A673 (cell line): ENCODE measurements at regions of chr2 and their contacts with region 1.

Region 1: GRCh38 chr2:234203135-234203984 is 152.9 kb downstream of the SPP2 start:
- DNase-seq: peak; percentile 82
- H3K4me3 ChIP-seq: no peak overlapping the region
- H3K27ac ChIP-seq: no peak overlapping the region
- H3K4me1 ChIP-seq: peaks cover 3% of the 10 kb centered on the region
- H3K27me3 ChIP-seq: no peaks in the 10 kb centered on the region
- CTCF ChIP-seq: no peak

Region 2: GRCh38 chr2:234218266-234219180 is 15.2 kb after region 1 on chr2:
- CTCF ChIA-PET with region 1: no interaction called
- POLR2A ChIA-PET with region 1: interaction called, 13 read pairs
- intact Hi-C with region 1: no loop called
- DNase-seq: no peak
- H3K4me3 ChIP-seq: no peak overlapping the region
- H3K27ac ChIP-seq: no peak overlapping the region
- H3K4me1 ChIP-seq: no peaks in the 10 kb centered on the region
- H3K27me3 ChIP-seq: peaks cover 14% of the 10 kb centered on the region
- CTCF ChIP-seq: no peak